Activated CD8-positive, alpha-beta T cell treated with anti-CD3 and anti-CD28 coated beads, Interleukin-2, amount 10 ng/mL, durations not matched to agents 7 days and 5 days (primary cell): ENCODE measurements at regions of chr19 and their contacts with region 1.

Region 1: DNA sequence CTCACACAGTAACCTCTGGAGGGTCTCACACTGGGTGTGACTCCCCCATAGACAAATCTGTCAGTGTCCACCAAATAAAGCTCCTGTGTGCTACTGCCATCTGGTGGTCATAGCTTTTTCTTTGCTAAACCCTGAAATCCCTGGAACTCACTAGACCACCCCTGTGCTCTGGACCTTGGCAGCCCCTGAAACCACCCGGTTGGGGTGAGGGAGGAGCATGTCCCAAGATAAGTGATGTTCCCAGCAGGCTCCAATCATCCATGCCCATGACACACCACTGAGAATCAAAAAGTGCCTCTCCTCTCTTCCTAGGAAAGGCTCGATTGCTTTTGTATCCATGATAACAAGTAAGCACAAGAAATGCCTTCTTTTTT is 6.5 kb upstream of the HSD17B14 start:
- DNase-seq: peak; percentile 72
- ATAC-seq: peak; percentile 57
- H3K4me3 Mint-ChIP-seq: no peak overlapping the region
- H3K27ac Mint-ChIP-seq: no peak overlapping the region
- H3K4me1 Mint-ChIP-seq: peaks cover 2% of the 10 kb centered on the region
- H3K27me3 Mint-ChIP-seq: no peaks in the 10 kb centered on the region

Region 2: GRCh38 chr19:48646001-48646721 is 196.6 kb before region 1 on chr19 and contains the start of gene CA11:
- CTCF ChIA-PET with region 1: interaction called, 20 read pairs
- POLR2A ChIA-PET with region 1: no interaction called
- DNase-seq: peak; percentile 93
- ATAC-seq: peak; percentile 90
- H3K4me3 Mint-ChIP-seq: peak within 1 kb of the TSS; percentile 79
- H3K27ac Mint-ChIP-seq: peak within 1 kb of the TSS; percentile 76
- H3K4me1 Mint-ChIP-seq: peaks cover 46% of the 10 kb centered on the region
- H3K27me3 Mint-ChIP-seq: no peaks in the 10 kb centered on the region
- total RNA-seq, gene CA11: 5.2 to 6.3 TPM

Region 3: DNA sequence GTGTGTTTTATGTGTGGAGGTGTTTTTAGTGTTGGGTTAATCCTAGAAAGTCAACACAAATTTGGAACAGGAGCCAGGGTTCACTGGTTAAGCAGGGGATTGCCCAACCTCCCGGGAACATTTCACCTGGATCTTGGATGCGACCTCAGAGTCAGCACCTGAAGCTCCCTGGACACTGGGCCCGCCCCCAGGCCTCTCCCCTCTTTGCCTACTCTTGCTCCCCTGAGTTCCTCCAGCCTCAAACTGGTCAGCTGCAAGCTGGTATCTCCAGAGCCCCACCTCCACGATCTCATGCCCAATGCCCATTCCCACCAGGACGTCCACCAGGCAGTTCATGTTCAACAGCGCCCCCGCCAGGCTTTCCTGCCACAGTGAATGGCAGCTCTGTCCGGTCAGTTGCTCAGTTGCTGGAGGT is 16.2 kb before region 1 on chr19:
- CTCF ChIA-PET with region 1: interaction called, 16 read pairs
- POLR2A ChIA-PET with region 1: no interaction called
- DNase-seq: no peak
- ATAC-seq: no peak
- H3K4me3 Mint-ChIP-seq: no peak overlapping the region
- H3K27ac Mint-ChIP-seq: no peak overlapping the region
- H3K4me1 Mint-ChIP-seq: no peaks in the 10 kb centered on the region
- H3K27me3 Mint-ChIP-seq: no peaks in the 10 kb centered on the region

Region 4: DNA sequence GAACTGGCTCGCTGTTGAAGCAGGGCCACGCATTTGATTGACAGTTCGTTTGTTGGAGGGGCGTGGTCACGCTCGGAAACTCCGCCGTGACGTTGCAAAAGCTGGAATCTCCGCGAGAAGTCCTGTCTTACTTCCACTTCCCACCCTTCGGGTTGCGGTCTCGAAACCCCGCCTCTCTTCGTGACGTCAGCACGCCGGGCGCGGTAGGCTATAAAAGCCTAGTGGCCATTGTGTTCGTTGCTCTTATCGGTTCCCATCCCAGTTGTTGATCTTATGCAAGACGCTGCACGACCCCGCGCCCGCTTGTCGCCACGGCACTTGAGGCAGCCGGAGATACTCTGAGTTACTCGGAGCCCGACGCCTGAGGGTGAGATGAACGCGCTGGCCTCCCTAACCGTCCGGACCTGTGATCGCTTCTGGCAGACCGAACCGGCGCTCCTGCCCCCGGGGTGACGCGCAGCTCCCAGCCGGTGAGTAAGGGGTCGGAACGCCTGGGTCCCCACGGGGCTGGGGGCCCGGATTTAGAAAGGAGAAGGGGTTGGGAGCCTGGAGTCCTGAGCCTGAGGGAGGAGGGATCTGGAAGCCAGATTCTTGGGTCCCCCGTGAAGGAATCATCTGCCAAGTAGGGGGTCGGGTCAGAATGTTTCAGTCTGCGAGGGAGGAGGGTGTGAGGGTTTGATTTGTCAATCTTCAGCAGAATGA is 29.6 kb after region 1 on chr19 and contains the start of gene PPP1R15A:
- CTCF ChIA-PET with region 1: interaction called, 12 read pairs
- POLR2A ChIA-PET with region 1: interaction called, 5 read pairs
- DNase-seq: peak; percentile 99
- ATAC-seq: peak; percentile 47
- H3K4me3 Mint-ChIP-seq: peak within 1 kb of the TSS; percentile 99
- H3K27ac Mint-ChIP-seq: peak within 1 kb of the TSS; percentile 98
- H3K4me1 Mint-ChIP-seq: peaks cover 42% of the 10 kb centered on the region
- H3K27me3 Mint-ChIP-seq: no peaks in the 10 kb centered on the region
- total RNA-seq, gene PPP1R15A: 104 to 124 TPM

Region 5: GRCh38 chr19:48970923-48971395 is 128.2 kb after region 1 on chr19:
- CTCF ChIA-PET with region 1: interaction called, 39 read pairs
- POLR2A ChIA-PET with region 1: no interaction called
- DNase-seq: peak; percentile 89
- ATAC-seq: peak; percentile 68
- H3K4me3 Mint-ChIP-seq: no peak overlapping the region
- H3K27ac Mint-ChIP-seq: no peak overlapping the region
- H3K4me1 Mint-ChIP-seq: peaks cover 31% of the 10 kb centered on the region
- H3K27me3 Mint-ChIP-seq: no peaks in the 10 kb centered on the region